ENCODE measurements at regions of chr3 and their contacts with region 1.

Region 1: DNA sequence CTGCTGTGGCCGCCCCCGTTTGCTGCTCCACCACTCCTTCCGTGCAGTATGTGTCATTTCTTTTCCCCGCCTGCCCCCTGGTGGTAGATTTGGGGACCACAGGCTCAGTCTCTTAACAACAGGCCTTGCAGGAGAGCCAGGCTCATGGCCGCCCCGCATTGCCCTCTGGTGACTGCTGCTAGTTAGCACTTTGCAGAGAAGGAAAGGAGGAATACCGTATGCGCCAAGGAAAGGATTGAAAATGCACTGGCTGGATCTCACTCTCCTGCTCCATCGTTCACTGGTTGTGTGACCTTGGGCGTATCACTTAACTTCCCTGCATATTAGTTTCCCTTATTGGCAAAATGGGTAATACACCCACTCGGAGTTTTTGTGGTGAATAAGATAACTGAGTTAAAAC is 39.3 kb upstream of the PXYLP1 start:
- DNase-seq: peak; percentile 98
- ATAC-seq: peak; percentile 100
- H3K4me3 Mint-ChIP-seq: no peak overlapping the region
- H3K27ac Mint-ChIP-seq: no peak overlapping the region
- H3K4me1 Mint-ChIP-seq: peaks cover 13% of the 10 kb centered on the region
- H3K27me3 Mint-ChIP-seq: peaks cover 2% of the 10 kb centered on the region

Region 2: GRCh38 chr3:140695361-140696061 is 496.8 kb before region 1 on chr3:
- CTCF ChIA-PET with region 1: no interaction called
- POLR2A ChIA-PET with region 1: no interaction called
- intact Hi-C with region 1: no loop called
- DNase-seq: no peak
- ATAC-seq: no peak
- H3K4me3 Mint-ChIP-seq: no peak overlapping the region
- H3K27ac Mint-ChIP-seq: no peak overlapping the region
- H3K4me1 Mint-ChIP-seq: no peaks in the 10 kb centered on the region
- H3K27me3 Mint-ChIP-seq: no peaks in the 10 kb centered on the region

Region 3: DNA sequence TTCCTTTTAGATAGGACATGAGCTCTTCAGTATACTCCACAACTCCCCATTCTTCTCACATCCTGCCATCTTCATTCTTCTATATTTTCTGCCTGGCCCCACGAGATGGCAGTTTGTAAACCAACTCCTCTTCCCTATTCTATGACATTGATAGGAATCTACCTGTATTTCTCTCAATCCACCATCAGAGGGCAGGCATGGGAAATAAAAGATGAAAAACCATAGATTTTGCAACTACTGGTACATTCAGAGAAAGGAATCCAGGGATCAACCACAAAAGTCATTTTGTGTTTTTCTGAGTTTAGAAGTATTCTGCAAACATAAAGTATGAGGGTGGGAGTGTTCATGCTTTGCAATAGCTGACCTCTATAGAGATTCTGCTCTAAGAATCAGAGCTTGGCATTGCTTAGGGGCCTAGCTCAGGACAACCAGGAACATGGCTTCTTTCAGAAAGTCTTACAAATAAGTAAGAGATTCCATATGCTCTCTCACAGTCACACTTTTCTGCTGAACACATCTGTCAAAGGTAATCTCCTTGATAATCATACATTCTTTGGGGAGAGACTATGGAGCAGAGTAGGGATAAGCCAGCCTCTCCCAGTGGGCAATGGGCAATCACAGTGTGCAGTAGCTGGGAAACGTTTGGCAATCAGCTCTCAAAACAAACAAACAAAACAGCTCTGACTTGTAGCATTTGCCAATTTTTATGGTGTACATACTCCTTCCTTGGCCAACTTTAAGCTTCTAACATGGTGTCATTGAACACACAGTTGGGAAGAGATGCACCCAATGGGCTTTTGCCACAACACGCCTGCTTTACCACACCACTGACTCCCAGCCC is 293.8 kb before region 1 on chr3:
- CTCF ChIA-PET with region 1: interaction called, 13 read pairs
- POLR2A ChIA-PET with region 1: no interaction called
- intact Hi-C with region 1: loop called in 1 of 2 experiments (anchors 1 kb)
- DNase-seq: peak; percentile 11
- ATAC-seq: peak; percentile 66
- H3K4me3 Mint-ChIP-seq: no peak overlapping the region
- H3K27ac Mint-ChIP-seq: no peak overlapping the region
- H3K4me1 Mint-ChIP-seq: no peaks in the 10 kb centered on the region
- H3K27me3 Mint-ChIP-seq: peaks cover 11% of the 10 kb centered on the region

Region 4: DNA sequence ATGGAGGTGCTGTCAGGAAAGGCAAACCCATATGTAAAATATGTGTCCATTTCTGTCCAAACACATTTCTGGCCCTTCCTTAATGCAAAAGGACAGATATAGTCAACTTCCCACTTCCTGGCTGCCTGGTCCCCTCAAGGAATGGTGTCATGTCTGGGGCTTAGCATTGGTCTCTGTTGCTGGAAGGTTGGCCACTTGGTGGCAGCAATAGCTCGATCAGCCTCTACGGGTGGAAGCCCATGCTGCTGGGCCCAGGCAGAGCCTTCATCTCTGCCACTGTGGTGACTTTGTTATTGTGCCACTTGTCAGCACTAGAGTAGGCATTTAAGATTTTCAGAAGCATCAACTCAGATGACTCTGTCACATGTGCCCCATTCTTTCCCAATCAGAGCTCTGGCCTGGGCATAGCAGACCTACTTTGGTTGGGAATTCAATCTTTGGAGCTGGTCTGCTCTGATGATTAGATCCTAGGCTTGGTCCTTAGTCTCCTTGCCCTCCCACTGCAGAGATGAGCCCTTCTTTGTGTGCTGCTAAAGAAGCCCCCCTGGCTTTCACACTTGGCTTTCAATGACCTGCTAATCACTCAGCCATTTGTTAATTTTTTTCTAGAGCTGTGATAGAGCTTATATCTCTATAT is 192.2 kb before region 1 on chr3:
- CTCF ChIA-PET with region 1: interaction called, 38 read pairs
- POLR2A ChIA-PET with region 1: no interaction called
- intact Hi-C with region 1: loop called (anchors 1 kb)
- DNase-seq: peak; percentile 74
- ATAC-seq: peak; percentile 90
- H3K4me3 Mint-ChIP-seq: no peak overlapping the region
- H3K27ac Mint-ChIP-seq: no peak overlapping the region
- H3K4me1 Mint-ChIP-seq: peaks cover 7% of the 10 kb centered on the region
- H3K27me3 Mint-ChIP-seq: no peaks in the 10 kb centered on the region

Region 5: DNA sequence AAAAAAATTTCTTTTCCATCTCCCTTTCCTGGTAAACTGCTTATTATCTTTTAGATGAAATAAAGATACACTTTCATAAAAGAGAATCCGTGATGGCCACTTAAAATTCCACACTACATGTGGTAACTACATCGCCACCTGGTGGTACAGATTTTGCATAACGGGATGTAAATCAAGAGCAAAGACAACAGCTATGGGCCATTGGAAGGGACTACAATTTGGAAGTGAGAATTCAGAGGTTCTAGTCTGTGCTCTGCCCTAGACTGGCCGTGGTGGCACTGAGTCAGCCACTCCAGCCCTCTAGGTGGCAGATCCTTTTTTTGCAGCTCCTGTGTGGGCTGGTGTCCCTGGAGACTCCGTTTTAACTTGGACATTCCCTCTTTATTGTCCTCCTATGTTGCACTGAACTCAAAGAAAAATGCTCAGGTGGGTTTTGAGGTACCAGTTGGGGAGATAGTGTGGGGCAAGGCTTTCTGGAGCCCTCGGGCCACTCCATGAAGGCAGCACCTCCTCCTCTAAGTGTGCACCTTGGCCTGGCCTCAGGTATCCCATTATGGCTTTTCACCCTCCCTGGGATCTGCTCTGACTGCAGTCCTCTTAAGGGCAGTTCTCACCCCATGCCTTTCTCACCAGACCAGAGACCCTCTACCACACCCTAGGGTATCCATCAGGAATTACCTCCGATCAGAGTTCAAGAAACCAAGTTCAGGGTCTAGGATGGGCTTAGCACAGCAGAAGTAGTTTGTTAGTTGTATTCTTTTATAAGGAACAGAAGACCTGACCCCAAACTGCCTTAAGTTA is 86.3 kb before region 1 on chr3:
- CTCF ChIA-PET with region 1: interaction called, 5 read pairs
- POLR2A ChIA-PET with region 1: no interaction called
- intact Hi-C with region 1: loop called in 1 of 2 experiments (anchors 1 kb)
- DNase-seq: peak; percentile 78
- ATAC-seq: peak; percentile 68
- H3K4me3 Mint-ChIP-seq: no peak overlapping the region
- H3K27ac Mint-ChIP-seq: no peak overlapping the region
- H3K4me1 Mint-ChIP-seq: no peaks in the 10 kb centered on the region
- H3K27me3 Mint-ChIP-seq: no peaks in the 10 kb centered on the region

Region 6: GRCh38 chr3:141223673-141224166 is 31.4 kb after region 1 on chr3:
- CTCF ChIA-PET with region 1: no interaction called
- POLR2A ChIA-PET with region 1: no interaction called
- intact Hi-C with region 1: no loop called
- DNase-seq: no peak
- ATAC-seq: no peak
- H3K4me3 Mint-ChIP-seq: no peak overlapping the region
- H3K27ac Mint-ChIP-seq: no peak overlapping the region
- H3K4me1 Mint-ChIP-seq: no peaks in the 10 kb centered on the region
- H3K27me3 Mint-ChIP-seq: no peaks in the 10 kb centered on the region

Measured in activated CD4-positive, alpha-beta T cell treated with anti-CD3 and anti-CD28 coated beads for 36 hours (primary cell).